Right ventricle myocardium inferior (tissue), 1 donor: ENCODE measurements at regions of chr22 and their contacts with region 1.

Region 1: DNA sequence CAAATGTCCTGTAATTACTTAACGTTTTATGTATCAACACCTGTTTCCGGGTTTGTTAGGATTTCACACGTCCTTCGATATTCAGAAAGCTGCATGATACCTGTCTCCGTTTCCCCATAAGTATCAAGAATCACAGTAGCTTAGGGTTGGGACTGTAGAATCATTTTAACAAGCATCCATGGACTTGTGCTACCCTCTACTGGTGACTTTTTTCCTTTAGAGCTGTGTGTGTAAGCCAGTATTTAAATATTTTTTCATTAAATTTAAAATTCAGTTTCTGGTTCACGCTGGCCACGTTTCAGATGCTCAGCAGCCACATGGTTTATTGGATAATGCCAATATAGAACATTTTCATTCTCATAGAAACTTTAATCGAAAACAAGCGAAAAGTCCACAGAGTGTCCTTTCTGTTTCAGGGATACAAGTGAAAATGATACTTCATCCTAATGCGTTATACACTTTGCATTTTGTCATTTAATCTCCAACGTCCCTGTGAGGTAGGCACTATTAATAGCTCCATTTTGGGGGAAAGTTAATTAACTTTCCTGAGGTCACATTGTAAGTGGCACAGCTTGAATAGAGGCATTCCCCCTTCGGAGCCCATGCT is 61.5 kb upstream of the SLC25A18 start:
- DNase-seq: no peak
- ATAC-seq: peak; percentile 85

Region 2: GRCh38 chr22:17077255-17077654 is 424.5 kb before region 1 on chr22:
- intact Hi-C with region 1: loop called (anchors 2 kb)
- DNase-seq: no peak
- ATAC-seq: no peak

Region 3: GRCh38 chr22:17199003-17199731 is 302.6 kb before region 1 on chr22:
- intact Hi-C with region 1: loop called (anchors 10 kb)
- DNase-seq: no peak
- ATAC-seq: peak; percentile 71

Region 4: DNA sequence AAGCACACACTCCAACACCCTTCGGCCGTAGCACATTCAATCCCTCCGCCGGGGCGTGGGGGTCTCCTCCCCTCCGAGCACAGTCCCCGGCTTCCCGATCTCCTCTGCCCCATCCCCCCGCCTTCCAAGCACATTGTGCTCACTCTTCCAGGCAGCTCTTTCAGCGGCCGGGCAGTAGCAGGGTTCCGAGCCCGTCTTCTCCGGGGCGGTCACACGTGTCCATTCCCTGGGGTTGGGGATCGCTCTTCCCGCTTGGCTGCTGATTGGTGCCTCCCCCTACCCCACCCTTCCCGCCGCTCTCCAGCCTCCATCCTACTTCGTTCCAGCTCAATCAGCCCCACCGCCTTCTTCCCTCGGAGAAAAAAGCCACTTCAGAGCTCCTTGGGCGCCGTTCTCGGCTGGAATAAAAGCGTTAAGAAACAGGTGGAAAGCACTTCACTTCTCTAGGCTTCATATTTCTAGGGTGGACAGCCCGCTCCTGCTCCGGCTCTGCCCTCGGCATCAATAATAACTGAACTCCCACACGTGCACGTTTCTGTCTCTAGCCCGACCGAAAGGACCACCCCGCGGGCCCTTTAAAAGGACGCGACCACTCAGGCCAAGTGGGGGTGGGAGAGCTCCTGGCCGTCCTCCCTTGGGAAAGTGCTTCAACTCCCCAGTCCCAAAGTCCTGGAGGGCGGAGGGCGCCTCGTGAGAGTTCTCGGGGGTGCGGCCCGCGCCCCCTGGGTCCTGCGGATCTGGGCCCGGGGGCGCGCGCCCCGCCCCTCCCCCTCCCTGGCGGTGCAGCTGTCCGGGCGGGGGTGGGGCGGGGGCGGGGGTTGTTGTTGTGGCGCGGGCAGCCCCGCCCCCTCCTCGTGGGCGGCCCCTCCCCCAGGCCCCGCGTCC is 133.0 kb before region 1 on chr22:
- intact Hi-C with region 1: loop called (anchors 2 kb)
- DNase-seq: peak; percentile 77
- ATAC-seq: peak; percentile 78

Region 5: DNA sequence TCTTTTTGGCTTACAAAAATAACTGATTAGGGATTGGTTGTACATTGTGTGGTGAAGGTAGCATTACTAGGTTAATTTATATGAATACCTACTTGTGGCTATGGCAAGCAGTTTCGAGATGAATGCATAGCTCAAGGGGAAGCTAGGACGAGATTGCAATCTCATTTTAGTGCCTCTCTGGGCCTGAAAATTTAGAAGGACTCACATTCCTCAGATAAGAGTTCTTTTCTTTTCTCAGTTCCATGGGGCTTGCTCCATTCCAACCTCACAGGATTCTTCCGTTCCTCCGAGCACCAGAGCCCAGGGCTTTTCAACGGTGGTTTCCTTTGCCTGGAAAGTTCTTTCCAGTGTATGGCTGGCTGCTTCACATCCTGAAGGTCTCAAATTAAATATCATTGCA is 50.5 kb before region 1 on chr22:
- intact Hi-C with region 1: no loop called
- DNase-seq: no peak
- ATAC-seq: no peak